Left ventricle myocardium superior (tissue), 1 donor: ENCODE measurements at regions of chr17 and their contacts with region 1.

Region 1: DNA sequence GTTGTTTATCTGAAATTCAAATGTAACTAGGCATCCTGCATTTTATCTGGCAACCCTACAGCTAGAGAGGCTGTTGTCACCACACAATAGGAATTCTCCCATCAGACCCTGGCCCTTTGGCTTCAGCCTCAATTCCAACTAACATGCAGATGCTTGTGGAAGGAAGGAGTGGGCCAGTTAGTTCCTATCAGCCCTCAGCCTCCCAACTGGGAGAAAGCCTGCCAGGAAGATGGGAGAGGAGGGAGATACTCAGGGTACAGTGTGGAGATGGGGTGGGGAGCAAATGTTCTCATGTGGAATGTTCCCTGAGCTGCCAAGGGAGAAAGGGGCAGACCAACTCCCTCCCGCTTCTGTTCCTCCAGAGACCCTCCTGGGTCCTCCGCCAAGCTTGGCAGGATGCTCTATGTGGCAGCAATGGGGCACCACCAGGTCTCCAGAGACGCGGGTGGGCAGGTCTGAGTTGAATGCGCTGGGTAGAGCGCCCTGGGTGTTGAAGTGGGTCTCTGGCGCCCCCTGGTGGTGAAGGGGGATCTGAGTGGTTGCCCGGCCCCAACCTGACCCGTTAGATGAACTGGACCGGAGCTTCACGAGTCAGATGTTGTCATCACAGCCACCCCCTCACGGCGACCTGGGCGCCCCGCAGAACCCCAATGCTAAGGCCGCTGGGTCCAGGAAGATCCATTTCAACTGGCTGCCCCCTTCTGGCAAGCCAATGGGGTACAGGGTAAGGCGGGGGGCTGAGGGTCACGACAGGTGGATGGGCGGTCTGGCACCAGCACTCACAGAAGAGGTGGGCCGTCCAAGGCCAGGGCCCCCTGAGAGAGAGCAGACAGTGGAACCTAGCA is 15.2 kb downstream of the GALK1 start:
- DNase-seq: peak; percentile 94
- ATAC-seq: peak; percentile 72

Region 2: DNA sequence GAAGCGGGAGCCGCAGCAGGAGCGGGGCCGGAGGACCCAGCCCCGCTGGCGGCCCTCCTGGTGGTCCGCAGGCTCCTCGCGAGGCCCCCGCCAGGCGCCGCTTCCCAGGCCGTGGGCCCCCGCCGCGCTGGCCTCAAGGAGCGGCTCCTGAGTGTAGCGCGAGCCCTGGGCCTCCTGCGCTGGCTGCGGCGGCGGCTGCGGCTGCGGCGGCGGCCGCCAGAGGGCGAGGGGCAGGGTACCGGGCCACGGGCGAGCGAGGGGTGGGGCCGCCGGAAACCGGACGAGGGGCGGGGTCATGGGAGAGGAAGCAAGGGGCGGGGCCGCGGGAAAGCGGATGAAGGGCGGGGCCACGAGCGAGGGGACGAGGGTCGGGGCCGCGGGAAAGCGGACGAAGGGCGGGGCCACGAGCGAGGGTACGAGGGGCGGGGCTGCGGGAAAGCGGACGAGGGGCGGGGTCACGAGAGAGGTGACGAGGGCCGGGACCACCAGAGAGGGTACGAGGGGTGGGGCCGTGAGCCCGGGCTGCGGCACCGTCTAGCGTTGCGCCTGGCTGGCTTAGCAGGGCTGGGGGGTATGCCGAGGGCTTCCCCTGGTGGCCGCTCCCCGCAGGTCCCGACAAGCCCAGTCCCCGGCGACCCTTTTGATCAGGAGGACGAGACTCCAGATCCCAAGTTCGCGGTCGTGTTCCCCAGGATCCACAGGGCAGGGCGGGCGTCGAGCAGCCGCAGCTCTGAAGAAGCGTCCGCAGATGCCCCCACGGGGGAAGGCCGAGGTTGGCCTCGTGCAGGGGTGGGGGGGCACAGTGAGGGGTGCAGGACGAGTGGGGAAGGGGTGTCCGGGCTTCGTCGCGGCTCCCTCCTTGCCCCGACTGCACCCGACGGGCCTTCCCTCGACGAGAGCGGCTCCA is 160.5 kb before region 1 on chr17:
- intact Hi-C with region 1: no loop called
- DNase-seq: peak; percentile 98
- ATAC-seq: peak; percentile 88

Region 3: GRCh38 chr17:75632863-75633485 is 116.8 kb before region 1 on chr17 and contains the start of gene SMIM5:
- intact Hi-C with region 1: loop called (anchors 5 kb)
- DNase-seq: peak; percentile 93
- ATAC-seq: peak; percentile 65
- total RNA-seq, gene SMIM5: 15.8 TPM

Region 4: GRCh38 chr17:75645889-75646637 is 103.7 kb before region 1 on chr17:
- intact Hi-C with region 1: no loop called
- DNase-seq: no peak
- ATAC-seq: peak; percentile 6

Region 5: GRCh38 chr17:75673487-75673886 is 76.3 kb before region 1 on chr17:
- intact Hi-C with region 1: loop called (anchors 5 kb)
- DNase-seq: no peak
- ATAC-seq: no peak

Region 6: DNA sequence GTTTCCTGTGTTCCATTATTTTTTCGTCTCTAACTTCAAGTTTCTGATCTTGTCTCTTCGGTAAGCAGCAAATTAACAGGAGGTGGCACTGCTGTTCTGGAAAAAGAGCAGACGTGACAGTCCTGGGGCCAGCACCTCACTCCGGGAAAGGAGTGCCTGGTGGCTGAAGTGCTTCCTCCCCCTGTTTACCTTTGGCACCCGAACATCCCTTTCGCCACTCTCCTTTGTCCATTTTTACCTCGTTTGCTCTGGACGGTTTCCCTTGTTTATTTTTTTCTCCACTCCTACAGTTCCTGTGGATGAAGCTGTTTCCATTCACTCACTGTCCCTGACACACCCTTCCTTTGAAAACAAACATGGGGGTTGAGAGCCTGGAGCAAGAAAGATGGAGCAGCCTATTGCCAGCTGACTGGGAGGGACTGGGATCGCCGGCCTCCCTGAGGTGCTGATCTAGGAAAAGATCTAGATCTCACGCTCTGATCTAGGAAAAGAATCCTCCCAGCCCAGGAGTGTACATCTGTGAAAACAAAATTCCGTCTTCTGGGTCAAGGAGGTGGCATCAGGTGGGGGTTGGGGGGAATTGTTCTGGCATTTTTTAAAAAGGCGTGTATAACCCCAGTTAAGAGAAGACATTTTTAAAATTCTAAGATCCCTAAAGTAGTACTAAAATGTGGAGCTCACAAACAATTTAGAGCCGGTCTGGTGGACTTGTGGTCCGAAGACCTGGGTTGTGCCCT is 69.9 kb before region 1 on chr17:
- intact Hi-C with region 1: loop called (anchors 5 kb)
- DNase-seq: peak; percentile 47
- ATAC-seq: peak; percentile 74

Region 7: DNA sequence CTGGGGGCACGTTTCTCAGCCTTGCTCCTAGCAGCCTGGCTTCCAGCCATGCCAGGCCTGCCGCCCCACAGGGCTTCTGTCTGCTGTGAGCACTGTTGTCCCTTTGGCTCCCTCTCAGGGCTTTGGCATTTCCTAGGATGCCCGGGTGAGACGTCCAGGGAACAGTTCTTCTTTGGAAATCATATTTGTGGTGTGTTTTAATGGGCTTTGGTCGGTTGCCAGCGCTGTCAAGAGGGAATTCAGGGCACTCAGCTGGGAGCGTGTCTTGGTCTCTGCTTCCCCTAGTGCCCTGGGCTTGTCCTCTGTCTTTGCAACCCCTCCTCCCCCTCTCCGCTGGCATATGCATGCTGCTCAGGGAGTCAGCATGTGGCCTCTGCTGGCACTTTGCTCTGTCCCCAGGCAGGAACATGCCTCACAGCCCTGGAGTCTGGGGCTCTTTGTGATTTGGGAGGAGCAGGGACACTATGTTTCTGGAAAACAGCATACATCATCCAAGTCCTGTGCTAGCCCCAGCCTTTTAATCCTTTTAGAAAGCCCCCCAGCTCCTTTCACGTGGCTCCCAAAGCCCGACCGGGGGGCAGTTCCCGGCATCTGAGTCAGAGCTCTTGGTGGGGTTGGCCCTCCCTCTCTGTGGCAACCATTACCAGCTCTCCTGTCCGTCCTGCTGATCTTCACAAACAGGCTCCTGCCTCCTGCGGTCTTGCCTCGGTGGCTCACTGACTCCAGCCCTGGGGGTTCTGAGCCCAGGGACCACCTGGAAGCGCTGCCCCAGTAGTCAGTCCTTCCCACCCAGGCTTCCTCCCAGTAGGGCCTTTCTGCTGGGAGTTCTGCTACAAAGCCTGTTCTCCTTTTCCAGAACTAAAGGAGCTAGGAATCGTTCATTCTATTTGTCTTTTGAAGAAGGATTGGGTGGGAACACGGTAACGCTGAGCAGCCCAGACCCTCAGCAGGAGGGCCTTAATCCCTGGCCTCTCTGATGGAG is 56.0 kb before region 1 on chr17:
- intact Hi-C with region 1: no loop called
- DNase-seq: peak; percentile 87
- ATAC-seq: peak; percentile 85